BJ (cell line): ENCODE measurements at regions of chr7 and their contacts with region 1.

Region 1: GRCh38 chr7:5596046-5596895 is 172.6 kb upstream of the TNRC18 start:
- DNase-seq: peak; percentile 60
- H3K4me3 ChIP-seq: peak overlapping the region; percentile 92
- H3K27me3 ChIP-seq: no peaks in the 10 kb centered on the region
- CTCF ChIP-seq: no peak

Region 2: DNA sequence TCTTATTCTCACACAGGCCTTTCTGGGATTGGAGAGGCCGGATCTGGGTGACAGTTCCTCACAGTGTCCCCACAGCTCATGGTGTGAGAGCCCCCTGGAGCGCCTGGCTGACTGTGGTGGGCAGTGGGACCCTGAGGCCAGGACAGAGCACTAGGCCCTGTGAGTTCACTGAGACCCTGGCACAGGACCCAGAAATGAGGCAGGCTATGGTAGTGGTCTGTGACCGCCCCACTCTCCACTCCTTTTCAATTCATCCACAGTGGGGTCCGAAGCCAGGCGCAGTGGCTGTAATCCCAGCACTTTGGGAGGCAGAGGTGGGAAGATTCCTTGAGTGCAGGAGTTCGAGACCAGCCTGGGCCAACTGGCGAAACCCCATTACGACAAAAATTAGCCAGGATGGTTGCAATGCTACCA is 76.7 kb before region 1 on chr7:
- CTCF ChIA-PET with region 1: no interaction called
- POLR2A ChIA-PET with region 1: interaction called, 11 read pairs
- DNase-seq: no peak
- H3K4me3 ChIP-seq: no peak overlapping the region
- H3K27me3 ChIP-seq: no peaks in the 10 kb centered on the region
- CTCF ChIP-seq: no peak

Region 3: DNA sequence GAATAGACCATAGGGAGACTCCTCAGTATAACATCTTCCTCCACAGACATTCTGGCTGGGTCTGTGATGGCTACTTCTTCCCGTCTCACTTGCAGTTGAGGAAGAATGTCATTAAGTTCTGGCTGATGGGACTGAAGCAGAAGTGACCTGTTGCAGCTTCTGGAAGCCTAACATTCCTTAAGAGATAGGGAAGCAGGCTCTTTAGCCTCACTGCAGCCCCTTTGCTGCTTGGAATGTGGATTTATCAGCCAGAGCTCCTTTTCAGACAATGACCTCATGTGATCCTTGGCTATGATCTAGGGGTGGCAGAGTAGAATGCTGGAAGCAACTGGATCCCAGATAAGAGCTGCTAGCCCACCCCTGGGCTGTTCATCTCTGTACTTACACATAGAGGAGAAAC is 42.7 kb after region 1 on chr7:
- CTCF ChIA-PET with region 1: interaction called, 5 read pairs
- POLR2A ChIA-PET with region 1: interaction called, 10 read pairs
- DNase-seq: no peak
- H3K4me3 ChIP-seq: no peak overlapping the region
- H3K27me3 ChIP-seq: no peaks in the 10 kb centered on the region
- CTCF ChIP-seq: no peak